Left ventricle myocardium inferior (tissue), 1 donor: ENCODE measurements at regions of chr4 and their contacts with region 1.

Region 1: DNA sequence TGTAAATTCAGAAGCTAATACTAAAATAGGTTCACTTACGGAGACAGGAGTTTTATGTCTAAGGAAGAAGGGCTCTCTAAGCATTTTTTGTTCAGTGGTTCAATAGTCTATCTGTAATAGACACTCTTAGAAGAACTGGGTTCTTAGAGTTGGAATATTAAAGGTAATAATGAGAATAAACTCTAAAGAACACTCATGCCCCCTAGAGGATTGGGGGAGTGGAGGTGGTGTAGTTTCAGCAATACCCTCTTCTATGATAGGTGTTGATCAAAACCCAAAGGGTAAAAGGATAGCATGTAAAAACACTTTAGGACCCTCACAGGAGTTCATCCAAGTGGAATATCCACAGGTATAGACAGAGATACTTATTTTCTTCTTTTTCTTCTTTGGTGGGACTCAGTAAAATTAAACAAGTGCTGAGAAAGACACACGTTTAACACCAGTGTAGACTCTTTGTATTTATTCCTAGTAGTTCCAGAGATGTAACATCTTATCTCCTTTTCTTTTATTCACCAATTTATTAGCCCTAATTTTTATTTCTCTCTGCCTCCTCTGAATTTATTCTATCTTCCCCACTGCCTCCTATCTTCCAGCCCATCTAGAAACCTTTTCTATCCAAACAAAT is 25.7 kb upstream of the MND1 start:
- DNase-seq: no peak
- H3K4me3 ChIP-seq: no peak overlapping the region
- H3K27ac ChIP-seq: no peak overlapping the region
- H3K4me1 ChIP-seq: no peaks in the 10 kb centered on the region
- H3K27me3 ChIP-seq: no peaks in the 10 kb centered on the region
- CTCF ChIP-seq: peak; percentile 78

Region 2: DNA sequence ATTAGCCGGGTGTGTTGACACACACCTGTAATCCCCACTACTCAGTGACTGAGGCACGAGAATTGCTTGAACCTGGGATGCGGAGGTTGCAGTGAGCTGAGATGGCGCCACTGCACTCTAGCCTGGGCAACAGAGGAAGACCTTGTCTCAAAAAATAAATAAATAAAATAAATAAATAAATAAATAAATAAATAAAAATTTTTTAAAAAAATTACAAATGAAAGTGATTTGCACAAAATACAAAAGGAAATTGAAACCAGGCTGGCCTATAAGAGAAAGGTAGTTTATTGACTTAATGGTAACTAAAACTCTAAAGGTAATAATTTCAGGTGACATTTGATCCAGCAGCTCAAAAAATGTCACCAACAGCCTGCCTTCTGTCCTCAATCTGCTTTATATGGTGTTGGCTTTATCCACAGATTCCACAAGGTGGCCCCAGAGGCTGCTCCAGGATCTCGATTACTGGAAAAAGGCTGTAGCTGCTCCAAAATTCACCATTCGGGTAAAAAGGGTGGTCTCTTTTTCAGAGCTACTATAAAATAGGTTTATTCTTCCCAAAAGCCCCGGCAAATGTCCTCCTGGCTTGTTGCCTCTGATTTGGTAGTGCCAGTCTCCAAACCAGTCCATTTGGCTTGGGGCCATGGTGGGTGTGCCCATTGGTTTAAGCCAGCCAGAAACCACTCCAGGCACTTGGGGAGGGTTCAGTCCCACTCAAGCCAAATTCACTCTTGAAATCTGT is 175.9 kb before region 1 on chr4:
- intact Hi-C with region 1: loop called (anchors 5 kb)
- DNase-seq: peak; percentile 62
- H3K4me3 ChIP-seq: peak overlapping the region; percentile 38
- H3K27ac ChIP-seq: no peak overlapping the region
- H3K4me1 ChIP-seq: peaks cover 12% of the 10 kb centered on the region
- H3K27me3 ChIP-seq: peaks cover 3% of the 10 kb centered on the region
- CTCF ChIP-seq: peak; percentile 89

Region 3: DNA sequence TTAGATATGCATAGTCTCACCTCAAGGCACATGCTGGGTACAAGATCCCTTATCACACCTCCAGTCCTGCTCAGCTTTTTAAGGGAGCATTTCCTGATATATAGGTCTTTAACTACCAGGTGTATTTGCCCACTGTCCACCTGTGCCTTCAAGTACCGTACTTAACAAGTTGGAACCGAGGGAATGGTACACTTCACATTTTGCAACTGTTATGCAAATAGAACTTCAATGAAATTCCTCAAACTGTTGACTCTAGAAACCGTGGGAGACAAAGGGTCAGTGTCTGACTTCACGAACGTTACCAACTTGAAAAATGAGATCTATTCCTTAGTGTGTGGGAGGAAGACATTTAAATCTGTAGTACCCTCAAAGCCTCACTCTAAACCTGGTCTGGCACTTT is 109.4 kb before region 1 on chr4:
- intact Hi-C with region 1: loop called (anchors 2 kb)
- DNase-seq: no peak
- H3K4me3 ChIP-seq: no peak overlapping the region
- H3K27ac ChIP-seq: no peak overlapping the region
- H3K4me1 ChIP-seq: peaks cover 34% of the 10 kb centered on the region
- H3K27me3 ChIP-seq: no peaks in the 10 kb centered on the region
- CTCF ChIP-seq: no peak

Region 4: DNA sequence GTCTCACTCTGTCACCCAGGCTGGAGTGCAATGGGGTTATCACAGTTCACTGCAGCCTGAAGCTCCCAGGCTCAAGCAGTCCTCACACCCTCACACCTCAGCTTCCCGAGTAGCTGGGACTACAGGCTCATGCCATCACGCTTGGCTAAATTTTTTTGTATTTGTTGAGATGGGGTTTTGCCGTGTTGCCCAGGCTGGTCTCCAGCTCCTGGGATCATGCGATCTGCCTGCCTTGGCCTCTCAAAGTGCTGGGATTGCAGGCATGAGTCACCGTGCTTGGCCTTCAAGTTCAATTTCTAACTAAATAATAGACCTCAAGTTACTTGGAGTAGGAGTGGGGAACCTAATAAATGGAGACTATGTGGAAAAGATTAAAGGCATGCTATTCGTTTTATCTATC is 74.6 kb after region 1 on chr4:
- intact Hi-C with region 1: no loop called
- DNase-seq: no peak
- H3K4me3 ChIP-seq: no peak overlapping the region
- H3K27ac ChIP-seq: no peak overlapping the region
- H3K4me1 ChIP-seq: no peaks in the 10 kb centered on the region
- H3K27me3 ChIP-seq: no peaks in the 10 kb centered on the region
- CTCF ChIP-seq: no peak

Region 5: DNA sequence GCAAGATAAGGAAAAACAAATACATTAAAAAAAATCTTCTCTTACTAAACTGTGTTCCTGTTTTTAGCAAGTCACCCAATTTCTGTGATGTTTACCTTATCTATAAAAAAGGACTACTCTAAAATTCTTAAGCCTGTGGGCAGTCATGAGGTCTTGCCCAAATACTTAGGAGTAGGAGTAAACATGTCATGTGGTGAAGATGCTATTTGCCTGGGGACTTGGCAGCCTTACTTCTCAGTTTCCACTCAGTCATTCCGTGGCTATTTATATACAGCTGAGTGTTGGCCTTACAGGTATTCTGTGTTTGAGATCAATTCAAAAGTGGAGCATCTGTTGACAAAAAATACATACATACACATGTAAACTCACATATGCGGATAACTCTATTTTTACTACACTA is 275.4 kb after region 1 on chr4:
- intact Hi-C with region 1: no loop called
- DNase-seq: no peak
- H3K4me3 ChIP-seq: no peak overlapping the region
- H3K27ac ChIP-seq: no peak overlapping the region
- H3K4me1 ChIP-seq: peaks cover 4% of the 10 kb centered on the region
- H3K27me3 ChIP-seq: no peaks in the 10 kb centered on the region
- CTCF ChIP-seq: no peak